Endothelial cell of umbilical vein (primary cell): ENCODE measurements at regions of chr3 and their contacts with region 1.

Region 1: DNA sequence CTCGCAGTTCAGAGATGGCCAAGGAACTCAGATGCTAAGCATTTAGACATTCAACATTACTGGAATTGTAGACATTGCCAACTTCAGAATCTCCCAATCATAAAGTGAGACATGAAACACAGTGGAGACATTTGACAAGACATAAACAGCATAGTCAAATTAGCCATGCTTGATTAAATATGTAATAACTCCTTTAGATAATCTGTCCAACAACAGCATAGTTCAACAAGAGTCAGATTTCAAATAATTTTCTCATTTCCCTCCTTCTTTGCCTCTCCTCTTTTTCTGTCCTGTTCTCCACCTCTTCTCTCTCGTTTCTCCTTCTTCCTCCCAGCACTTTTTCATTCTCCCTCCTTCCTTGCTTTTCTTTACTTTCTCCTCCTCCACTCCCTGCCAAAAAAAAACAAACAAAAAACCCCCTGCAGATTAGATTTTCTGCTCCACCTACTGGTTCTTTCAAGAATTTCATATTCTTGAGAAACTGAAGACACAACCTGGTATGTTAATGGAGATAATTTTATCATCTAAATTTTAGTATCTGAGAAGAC is 20.2 kb downstream of the CPOX start:
- DNase-seq: peak; percentile 57
- H3K4me3 ChIP-seq: no peak overlapping the region
- H3K27ac ChIP-seq: no peak overlapping the region
- H3K4me1 ChIP-seq: peaks cover 3% of the 10 kb centered on the region
- H3K27me3 ChIP-seq: no peaks in the 10 kb centered on the region
- CTCF ChIP-seq: peak in 1 of 2 donors; percentile 27
- POLR2A ChIP-seq: no peak

Region 2: GRCh38 chr3:98039322-98040024 is 533.8 kb before region 1 on chr3:
- CTCF ChIA-PET with region 1: interaction called, 5 read pairs
- POLR2A ChIA-PET with region 1: no interaction called
- dilution Hi-C with region 1: no loop called
- intact Hi-C with region 1: loop called (anchors 1 kb)
- DNase-seq: peak; percentile 87
- H3K4me3 ChIP-seq: peak overlapping the region in 2 of 3 experiments; percentile 19 to 56
- H3K27ac ChIP-seq: no peak overlapping the region
- H3K4me1 ChIP-seq: no peaks in the 10 kb centered on the region
- H3K27me3 ChIP-seq: peaks cover 9 to 14% of the 10 kb centered on the region in 2 experiments
- CTCF ChIP-seq: peak; percentile 76 to 84
- POLR2A ChIP-seq: no peak

Region 3: GRCh38 chr3:98343647-98344507 is 229.4 kb before region 1 on chr3:
- CTCF ChIA-PET with region 1: no interaction called
- POLR2A ChIA-PET with region 1: no interaction called
- dilution Hi-C with region 1: no loop called
- intact Hi-C with region 1: loop called (anchors 5 kb)
- DNase-seq: peak; percentile 42
- H3K4me3 ChIP-seq: no peak overlapping the region
- H3K27ac ChIP-seq: no peak overlapping the region
- H3K4me1 ChIP-seq: peaks cover 2% of the 10 kb centered on the region
- H3K27me3 ChIP-seq: peaks cover 4 to 5% of the 10 kb centered on the region in 2 experiments
- CTCF ChIP-seq: peak; percentile 60 to 65
- POLR2A ChIP-seq: no peak

Region 4: GRCh38 chr3:98522244-98523090 is 50.8 kb before region 1 on chr3 and contains the start of gene CLDND1:
- CTCF ChIA-PET with region 1: interaction called, 7 read pairs
- POLR2A ChIA-PET with region 1: no interaction called
- dilution Hi-C with region 1: no loop called
- intact Hi-C with region 1: loop called (anchors 5 kb)
- DNase-seq: peak; percentile 98
- H3K4me3 ChIP-seq: peak within 1 kb of the TSS; percentile 86 to 97 (median 94)
- H3K27ac ChIP-seq: peak within 1 kb of the TSS; percentile 94
- H3K4me1 ChIP-seq: peaks cover 13% of the 10 kb centered on the region
- H3K27me3 ChIP-seq: peaks cover 0 to 2% of the 10 kb centered on the region in 2 experiments
- CTCF ChIP-seq: no peak
- POLR2A ChIP-seq: peak; percentile 81
- total RNA-seq, gene CLDND1: 93.1 and 101 TPM in 2 replicates